Calu3 (cell line): ENCODE measurements at regions of chr4 and their contacts with region 1.

Region 1: DNA sequence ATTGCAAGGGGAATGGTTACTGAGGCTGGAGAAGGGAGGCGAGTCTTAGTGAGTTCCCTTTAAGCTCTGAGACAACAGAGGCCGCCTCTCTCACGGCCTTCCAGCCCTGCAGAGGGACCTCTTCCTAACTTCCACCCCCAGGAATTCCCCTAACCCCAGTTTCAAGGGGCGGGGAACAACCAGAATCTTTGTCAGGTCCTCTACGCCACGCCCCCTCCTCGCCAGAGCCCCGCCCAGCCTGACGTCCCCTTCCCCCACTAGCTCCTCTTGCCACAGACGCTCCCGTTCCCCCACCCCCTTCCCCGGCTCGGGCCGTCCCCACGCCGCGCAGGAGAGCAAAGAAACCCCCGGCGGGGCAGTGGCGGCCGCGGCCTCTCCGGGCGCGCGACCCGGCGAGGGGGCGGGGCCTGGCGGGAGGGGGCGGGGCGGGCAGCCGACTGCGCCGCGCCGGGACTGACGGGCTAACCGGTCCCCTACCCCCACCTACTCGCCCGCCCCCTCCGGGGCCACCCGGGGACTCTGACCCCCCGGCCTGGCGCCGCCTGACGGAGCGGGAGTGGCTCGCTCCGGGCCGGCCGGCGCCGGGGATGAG is 12.3 kb upstream of the TMEM156 start:
- DNase-seq: peak; percentile 85
- H3K4me3 Mint-ChIP-seq: peak overlapping the region; percentile 56
- H3K27ac Mint-ChIP-seq: peak overlapping the region; percentile 73
- H3K4me1 Mint-ChIP-seq: peaks cover 31% of the 10 kb centered on the region
- H3K27me3 Mint-ChIP-seq: no peaks in the 10 kb centered on the region
- CTCF ChIP-seq: no peak

Region 2: DNA sequence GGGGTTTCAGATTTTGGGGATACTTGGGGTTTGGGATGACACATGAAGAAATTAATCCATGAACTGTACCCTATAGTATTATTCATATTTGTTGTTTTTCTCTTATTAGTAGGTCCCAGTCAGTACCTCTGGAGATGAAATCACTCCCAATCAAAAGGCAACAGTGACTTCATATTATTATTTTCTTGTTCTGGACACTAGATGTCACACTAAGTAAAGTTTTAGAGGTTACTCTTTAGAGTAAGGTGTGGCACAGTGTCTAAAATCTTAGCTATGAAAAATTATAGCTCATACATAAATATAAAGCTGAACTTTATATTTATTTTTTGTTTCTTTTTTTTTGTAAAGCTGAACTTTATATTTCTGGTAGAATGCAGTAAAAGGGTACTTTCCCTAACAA is 141.8 kb before region 1 on chr4:
- CTCF ChIA-PET with region 1: interaction called, 6 read pairs
- intact Hi-C with region 1: loop called (anchors 1 kb)
- DNase-seq: no peak
- H3K4me3 Mint-ChIP-seq: no peak overlapping the region
- H3K27ac Mint-ChIP-seq: no peak overlapping the region
- H3K4me1 Mint-ChIP-seq: peaks cover 12% of the 10 kb centered on the region
- H3K27me3 Mint-ChIP-seq: no peaks in the 10 kb centered on the region
- CTCF ChIP-seq: peak; percentile 16

Region 3: GRCh38 chr4:39029752-39030694 is 14.4 kb before region 1 on chr4:
- CTCF ChIA-PET with region 1: interaction called, 3 read pairs
- intact Hi-C with region 1: loop called (anchors 2 kb)
- DNase-seq: no peak
- H3K4me3 Mint-ChIP-seq: peak overlapping the region; percentile 54
- H3K27ac Mint-ChIP-seq: no peak overlapping the region
- H3K4me1 Mint-ChIP-seq: no peaks in the 10 kb centered on the region
- H3K27me3 Mint-ChIP-seq: no peaks in the 10 kb centered on the region
- CTCF ChIP-seq: no peak